Naive thymus-derived CD4-positive, alpha-beta T cell (primary cell): ENCODE measurements at regions of chr4 and their contacts with region 1.

Region 1: DNA sequence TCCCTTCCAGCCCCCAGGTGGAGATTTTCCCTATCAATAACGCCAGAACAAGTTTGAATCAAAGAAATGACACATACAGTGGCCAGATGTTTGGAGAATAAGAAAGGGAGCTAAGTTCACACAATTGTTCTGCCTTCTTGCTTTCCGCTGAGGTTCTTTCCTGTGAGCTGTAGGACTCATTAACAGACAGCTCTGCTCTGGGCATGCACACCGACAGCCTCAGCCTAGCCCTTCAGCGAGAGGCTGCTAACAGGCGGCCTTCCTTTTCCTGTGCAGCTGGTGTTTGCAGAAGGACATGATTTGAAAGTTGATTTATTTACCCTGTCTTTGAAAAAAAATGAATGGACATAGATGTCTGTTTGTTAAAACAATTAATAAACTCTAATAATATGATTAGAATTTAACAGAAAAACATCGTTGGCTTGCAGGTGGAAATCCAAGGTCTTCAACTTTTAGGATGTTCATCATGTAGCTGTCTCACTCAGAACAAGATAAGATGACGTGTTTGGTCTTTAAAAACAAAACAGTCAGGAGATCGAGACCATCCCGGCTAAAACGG is 183.3 kb downstream of the KDR start:
- DNase-seq: peak in 8 of 9 donors; percentile 22 to 82 (median 71)
- ATAC-seq: peak; percentile 79
- H3K4me3 ChIP-seq: peak overlapping the region; percentile 36
- H3K4me3 Mint-ChIP-seq: peak overlapping the region; percentile 71 to 85 (median 79)
- H3K27ac ChIP-seq: peak overlapping the region; percentile 87
- H3K27ac Mint-ChIP-seq: peak overlapping the region; percentile 79 to 99 (median 97)
- H3K4me1 ChIP-seq: peaks cover 0 to 37% of the 10 kb centered on the region in 2 donors
- H3K4me1 Mint-ChIP-seq: peaks cover 27 to 77% (median 58%) of the 10 kb centered on the region in 7 donors
- H3K27me3 ChIP-seq: no peaks in the 10 kb centered on the region
- H3K27me3 Mint-ChIP-seq: peaks cover 0 to 5% (median 0%) of the 10 kb centered on the region in 5 donors

Region 2: DNA sequence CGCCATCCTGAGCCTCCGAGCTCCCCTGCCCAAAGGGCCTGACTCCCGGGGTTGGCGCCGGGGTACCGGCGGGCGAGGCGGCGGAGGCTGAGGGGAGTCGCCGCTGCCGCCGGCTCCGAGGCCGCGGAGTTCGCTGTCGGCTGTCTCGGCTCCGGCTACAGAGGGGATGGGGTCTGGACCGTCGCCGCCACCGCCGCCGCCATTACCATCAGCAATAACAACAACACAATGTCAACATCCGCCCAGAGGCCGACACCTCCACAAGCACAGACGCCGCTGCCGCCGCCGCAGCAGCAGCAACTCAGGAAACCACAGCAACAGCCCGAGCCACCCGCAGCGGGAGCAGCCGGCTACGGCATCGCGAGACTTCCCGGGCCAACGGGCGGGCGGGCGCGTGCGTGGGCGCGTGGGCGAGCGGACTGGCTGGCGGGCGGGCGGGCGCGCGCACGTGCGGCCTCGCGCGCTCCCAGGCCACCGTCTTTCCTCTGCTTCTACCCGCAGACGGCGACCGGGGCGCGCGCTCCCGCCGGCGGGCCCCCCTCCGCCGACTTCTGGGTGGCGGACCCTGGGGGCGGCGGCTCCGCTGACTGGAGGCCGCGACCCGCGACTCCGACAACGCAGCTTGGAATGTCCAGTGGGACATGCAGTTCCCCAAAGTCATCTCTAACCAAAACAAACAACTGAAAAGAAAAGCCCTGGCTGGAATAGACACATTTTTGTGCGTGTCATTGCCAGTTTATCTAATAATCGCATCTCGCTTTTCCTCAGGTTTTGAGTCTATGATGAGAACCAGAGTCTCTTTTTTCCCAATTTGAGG is 877.6 kb before region 1 on chr4 and contains the start of gene CHIC2:
- CTCF ChIA-PET with region 1: no interaction called
- POLR2A ChIA-PET with region 1: interaction called, 3 read pairs
- intact Hi-C with region 1: loop called (anchors 2 kb)
- DNase-seq: peak; percentile 95 to 99 (median 98)
- ATAC-seq: peak; percentile 94
- H3K4me3 ChIP-seq: peak within 1 kb of the TSS; percentile 77
- H3K4me3 Mint-ChIP-seq: peak within 1 kb of the TSS; percentile 94 to 100 (median 97)
- H3K27ac ChIP-seq: peak within 1 kb of the TSS; percentile 100
- H3K27ac Mint-ChIP-seq: peak within 1 kb of the TSS; percentile 95 to 99 (median 98)
- H3K4me1 ChIP-seq: peaks cover 8 to 32% of the 10 kb centered on the region in 2 donors
- H3K4me1 Mint-ChIP-seq: peaks cover 39 to 59% (median 44%) of the 10 kb centered on the region in 7 donors
- H3K27me3 ChIP-seq: no peaks in the 10 kb centered on the region
- H3K27me3 Mint-ChIP-seq: peaks cover 0 to 2% (median 0%) of the 10 kb centered on the region in 5 donors
- total RNA-seq, gene CHIC2: 22.4 to 55.7 (median 40.7) TPM

Region 3: DNA sequence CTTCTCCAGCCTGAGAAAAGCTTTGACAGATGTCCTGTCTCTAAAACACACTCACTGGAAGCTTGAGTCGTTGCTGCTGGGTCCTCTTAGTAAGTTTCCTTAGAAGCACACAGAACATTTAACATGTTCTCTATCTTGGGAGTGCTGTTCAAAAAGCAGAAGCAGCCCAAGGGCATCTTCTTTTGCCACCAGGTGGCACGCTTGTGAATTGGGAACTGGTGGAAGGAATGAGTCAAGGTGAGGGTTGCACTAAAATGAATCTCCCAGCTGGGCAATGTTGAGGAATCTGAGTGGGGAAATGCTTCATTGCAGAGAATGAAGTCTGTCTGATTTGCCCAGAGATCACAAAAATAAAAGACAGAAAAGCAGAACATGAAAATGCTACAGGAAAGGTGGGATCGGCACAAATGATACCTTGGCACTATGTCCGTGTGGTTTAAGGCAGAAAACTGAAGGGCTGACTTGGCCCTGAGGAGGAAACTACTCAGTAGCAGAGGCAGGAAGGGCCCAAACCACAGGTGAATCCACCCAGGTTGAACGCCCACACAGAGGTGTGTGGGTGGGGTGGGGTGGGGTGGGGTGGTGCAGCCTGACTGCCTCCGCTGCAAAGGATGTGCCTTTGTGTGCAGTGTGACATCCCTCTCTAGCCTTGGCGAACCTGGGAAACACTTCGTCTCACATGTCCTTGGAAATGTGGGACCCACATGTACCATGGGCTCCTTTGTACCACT is 258.3 kb before region 1 on chr4:
- CTCF ChIA-PET with region 1: interaction called, 11 read pairs
- POLR2A ChIA-PET with region 1: interaction called, 3 read pairs
- intact Hi-C with region 1: loop called (anchors 1 to 5 kb)
- DNase-seq: peak; percentile 21 to 65 (median 45)
- ATAC-seq: peak; percentile 65
- H3K4me3 ChIP-seq: no peak overlapping the region
- H3K4me3 Mint-ChIP-seq: peak overlapping the region; percentile 44 to 85 (median 69)
- H3K27ac ChIP-seq: no peak overlapping the region
- H3K27ac Mint-ChIP-seq: peak overlapping the region in 8 of 9 donors; percentile 10 to 92 (median 80)
- H3K4me1 ChIP-seq: peaks cover 0 to 7% of the 10 kb centered on the region in 2 donors
- H3K4me1 Mint-ChIP-seq: peaks cover 15 to 36% (median 29%) of the 10 kb centered on the region in 7 donors
- H3K27me3 ChIP-seq: no peaks in the 10 kb centered on the region
- H3K27me3 Mint-ChIP-seq: no peaks in the 10 kb centered on the region

Region 4: GRCh38 chr4:54961357-54961975 is 19.4 kb after region 1 on chr4:
- CTCF ChIA-PET with region 1: interaction called, 47 read pairs
- POLR2A ChIA-PET with region 1: interaction called, 39 read pairs
- intact Hi-C with region 1: loop called (anchors 1 to 2 kb)
- DNase-seq: peak in 4 of 9 donors; percentile 29 to 48 (median 40)
- ATAC-seq: peak; percentile 46
- H3K4me3 ChIP-seq: no peak overlapping the region
- H3K4me3 Mint-ChIP-seq: no peak overlapping the region
- H3K27ac ChIP-seq: no peak overlapping the region
- H3K27ac Mint-ChIP-seq: peak overlapping the region in 2 of 9 donors; percentile 61 to 62
- H3K4me1 ChIP-seq: peaks cover 0 to 8% of the 10 kb centered on the region in 2 donors
- H3K4me1 Mint-ChIP-seq: peaks cover 5 to 37% (median 11%) of the 10 kb centered on the region in 7 donors
- H3K27me3 ChIP-seq: no peaks in the 10 kb centered on the region
- H3K27me3 Mint-ChIP-seq: peaks cover 0 to 3% (median 0%) of the 10 kb centered on the region in 5 donors

Region 5: DNA sequence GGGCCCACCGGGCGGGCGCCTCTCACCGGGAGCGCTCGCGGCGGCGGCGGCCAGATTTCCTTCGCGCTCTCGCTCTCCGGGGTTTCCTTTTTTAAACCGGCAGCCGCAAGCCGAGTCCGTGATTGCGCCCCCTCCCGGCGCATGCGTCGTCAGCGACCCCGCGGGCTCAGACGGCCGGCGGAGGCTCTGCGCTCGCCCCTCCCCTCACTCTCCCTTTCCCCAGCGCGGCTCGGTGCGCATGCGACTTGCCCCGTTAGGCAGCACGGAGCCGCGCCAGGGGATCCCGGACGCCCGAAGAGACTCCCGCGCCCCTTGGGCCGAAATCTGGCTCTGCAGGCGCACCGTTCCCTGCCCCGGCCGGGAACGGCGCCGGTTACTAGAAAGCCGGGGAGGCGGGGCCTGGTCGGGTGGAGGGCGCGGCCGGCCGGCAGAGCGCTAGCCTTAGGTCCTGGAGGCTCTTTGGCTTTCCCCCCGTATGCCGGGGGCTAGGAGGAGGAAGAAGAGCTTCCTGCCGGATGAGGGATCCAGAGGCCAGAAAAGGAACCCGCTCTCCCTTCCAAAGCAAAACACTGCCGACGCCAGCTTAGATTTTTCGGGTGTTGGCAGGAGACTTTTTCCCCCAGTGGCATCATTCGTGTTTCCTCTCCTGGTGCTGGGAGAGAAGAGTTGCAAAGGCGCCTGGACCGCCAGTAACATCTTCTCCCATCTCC is 604.8 kb after region 1 on chr4 and contains the start of gene CLOCK:
- CTCF ChIA-PET with region 1: no interaction called
- POLR2A ChIA-PET with region 1: no interaction called
- intact Hi-C with region 1: loop called (anchors 1 to 10 kb)
- DNase-seq: peak; percentile 79 to 87 (median 83)
- ATAC-seq: peak; percentile 82
- H3K4me3 ChIP-seq: peak within 1 kb of the TSS; percentile 82
- H3K4me3 Mint-ChIP-seq: peak within 1 kb of the TSS; percentile 88 to 96 (median 94)
- H3K27ac ChIP-seq: peak within 1 kb of the TSS; percentile 84
- H3K27ac Mint-ChIP-seq: peak within 1 kb of the TSS; percentile 87 to 92 (median 90)
- H3K4me1 ChIP-seq: peaks cover 5 to 8% of the 10 kb centered on the region in 2 donors
- H3K4me1 Mint-ChIP-seq: peaks cover 21 to 57% (median 40%) of the 10 kb centered on the region in 7 donors
- H3K27me3 ChIP-seq: no peaks in the 10 kb centered on the region
- H3K27me3 Mint-ChIP-seq: peaks cover 0 to 29% (median 0%) of the 10 kb centered on the region in 5 donors
- total RNA-seq, gene CLOCK: 7.9 to 12.6 (median 8.9) TPM

Region 6: DNA sequence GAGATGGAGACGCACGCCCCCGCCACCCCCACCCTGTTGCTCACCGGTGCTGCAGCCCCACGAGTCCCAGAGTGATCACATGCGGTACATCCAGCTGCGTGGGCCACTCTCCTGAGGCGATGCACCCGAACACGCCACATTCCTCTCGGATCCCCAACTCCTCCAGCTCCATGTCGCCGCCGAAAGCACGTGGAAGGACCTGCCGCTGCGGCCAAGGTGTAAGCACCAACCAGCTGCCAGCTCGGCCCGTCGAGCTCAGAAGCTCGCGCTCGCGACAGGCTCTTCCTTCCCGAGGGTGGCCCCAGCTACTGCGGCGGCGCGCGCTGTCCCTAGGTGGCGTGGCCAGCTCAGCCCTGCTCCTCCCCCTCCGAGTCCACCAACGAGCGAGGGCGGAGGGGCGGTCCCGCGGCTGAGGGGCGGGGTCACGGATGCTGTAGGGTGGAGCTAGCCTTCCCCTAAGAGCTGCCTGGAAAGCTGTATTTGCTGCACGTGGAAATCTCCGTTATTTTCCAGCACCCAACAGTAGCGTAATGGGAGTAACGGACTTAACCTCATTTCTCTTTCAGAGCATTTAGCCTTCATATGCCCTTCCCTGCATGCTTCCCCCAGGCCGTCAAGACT is 1493.3 kb after region 1 on chr4 and contains the start of gene PPAT:
- CTCF ChIA-PET with region 1: no interaction called
- POLR2A ChIA-PET with region 1: no interaction called
- intact Hi-C with region 1: loop called in 1 of 2 experiments (anchors 2 kb)
- DNase-seq: peak; percentile 97 to 100 (median 99)
- ATAC-seq: peak; percentile 91
- H3K4me3 ChIP-seq: peak within 1 kb of the TSS; percentile 93
- H3K4me3 Mint-ChIP-seq: peak within 1 kb of the TSS; percentile 81 to 99 (median 94)
- H3K27ac ChIP-seq: peak within 1 kb of the TSS; percentile 59
- H3K27ac Mint-ChIP-seq: peak within 1 kb of the TSS; percentile 78 to 98 (median 91)
- H3K4me1 ChIP-seq: peaks cover 12 to 15% of the 10 kb centered on the region in 2 donors
- H3K4me1 Mint-ChIP-seq: peaks cover 33 to 63% (median 47%) of the 10 kb centered on the region in 7 donors
- H3K27me3 ChIP-seq: no peaks in the 10 kb centered on the region
- H3K27me3 Mint-ChIP-seq: no peaks in the 10 kb centered on the region
- total RNA-seq, gene PPAT: 7.7 to 30.7 (median 15.3) TPM